Activated CD8-positive, alpha-beta T cell treated with anti-CD3 and anti-CD28 coated beads, Interleukin-2, amount 10 ng/mL, durations not matched to agents 7 days and 5 days (primary cell): ENCODE measurements at regions of chr22 and their contacts with region 1.

Region 1: GRCh38 chr22:41589391-41590241 is at the start of gene PMM1:
- DNase-seq: peak; percentile 100
- ATAC-seq: peak; percentile 98
- H3K4me3 Mint-ChIP-seq: peak within 1 kb of the TSS; percentile 94
- H3K27ac Mint-ChIP-seq: peak within 1 kb of the TSS; percentile 96
- H3K4me1 Mint-ChIP-seq: peaks cover 20% of the 10 kb centered on the region
- H3K27me3 Mint-ChIP-seq: no peaks in the 10 kb centered on the region
- total RNA-seq, gene PMM1: 37.5 to 38.2 TPM

Region 2: GRCh38 chr22:41570221-41570620 is 19.4 kb before region 1 on chr22:
- CTCF ChIA-PET with region 1: no interaction called
- POLR2A ChIA-PET with region 1: interaction called, 11 read pairs
- DNase-seq: no peak
- ATAC-seq: no peak
- H3K4me3 Mint-ChIP-seq: no peak overlapping the region
- H3K27ac Mint-ChIP-seq: no peak overlapping the region
- H3K4me1 Mint-ChIP-seq: peaks cover 4% of the 10 kb centered on the region
- H3K27me3 Mint-ChIP-seq: peaks cover 3% of the 10 kb centered on the region

Region 3: GRCh38 chr22:41576877-41577276 is 12.7 kb before region 1 on chr22:
- CTCF ChIA-PET with region 1: interaction called, 12 read pairs
- POLR2A ChIA-PET with region 1: interaction called, 7 read pairs
- DNase-seq: peak; percentile 64
- ATAC-seq: peak; percentile 80
- H3K4me3 Mint-ChIP-seq: no peak overlapping the region
- H3K27ac Mint-ChIP-seq: no peak overlapping the region
- H3K4me1 Mint-ChIP-seq: peaks cover 5% of the 10 kb centered on the region
- H3K27me3 Mint-ChIP-seq: no peaks in the 10 kb centered on the region

Region 4: DNA sequence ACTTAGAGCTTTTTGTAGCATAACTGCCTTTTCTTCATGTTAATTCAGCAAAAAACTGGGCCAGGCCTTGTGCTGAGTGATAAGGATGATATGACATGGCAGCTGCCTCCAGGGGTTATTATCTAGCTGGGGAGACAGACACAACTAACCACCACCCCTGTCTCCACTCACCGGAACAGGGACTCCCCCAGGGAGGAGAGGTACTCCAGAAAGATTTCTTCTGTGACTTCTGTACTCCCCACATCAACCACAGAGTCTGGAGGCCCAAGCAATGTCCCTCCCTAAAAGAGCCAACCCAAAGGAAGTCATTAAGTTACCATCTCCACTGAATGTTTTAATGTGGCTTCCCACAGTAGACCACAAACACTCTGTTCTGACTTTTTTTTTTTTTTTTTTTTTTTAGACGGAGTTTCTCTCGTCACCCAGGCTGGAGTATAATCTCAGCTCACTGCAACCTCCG is 14.3 kb after region 1 on chr22:
- CTCF ChIA-PET with region 1: interaction called, 3 read pairs
- POLR2A ChIA-PET with region 1: interaction called, 15 read pairs
- DNase-seq: peak; percentile 79
- ATAC-seq: peak; percentile 98
- H3K4me3 Mint-ChIP-seq: peak overlapping the region; percentile 40
- H3K27ac Mint-ChIP-seq: peak overlapping the region; percentile 67
- H3K4me1 Mint-ChIP-seq: peaks cover 29% of the 10 kb centered on the region
- H3K27me3 Mint-ChIP-seq: peaks cover 8% of the 10 kb centered on the region

Region 5: DNA sequence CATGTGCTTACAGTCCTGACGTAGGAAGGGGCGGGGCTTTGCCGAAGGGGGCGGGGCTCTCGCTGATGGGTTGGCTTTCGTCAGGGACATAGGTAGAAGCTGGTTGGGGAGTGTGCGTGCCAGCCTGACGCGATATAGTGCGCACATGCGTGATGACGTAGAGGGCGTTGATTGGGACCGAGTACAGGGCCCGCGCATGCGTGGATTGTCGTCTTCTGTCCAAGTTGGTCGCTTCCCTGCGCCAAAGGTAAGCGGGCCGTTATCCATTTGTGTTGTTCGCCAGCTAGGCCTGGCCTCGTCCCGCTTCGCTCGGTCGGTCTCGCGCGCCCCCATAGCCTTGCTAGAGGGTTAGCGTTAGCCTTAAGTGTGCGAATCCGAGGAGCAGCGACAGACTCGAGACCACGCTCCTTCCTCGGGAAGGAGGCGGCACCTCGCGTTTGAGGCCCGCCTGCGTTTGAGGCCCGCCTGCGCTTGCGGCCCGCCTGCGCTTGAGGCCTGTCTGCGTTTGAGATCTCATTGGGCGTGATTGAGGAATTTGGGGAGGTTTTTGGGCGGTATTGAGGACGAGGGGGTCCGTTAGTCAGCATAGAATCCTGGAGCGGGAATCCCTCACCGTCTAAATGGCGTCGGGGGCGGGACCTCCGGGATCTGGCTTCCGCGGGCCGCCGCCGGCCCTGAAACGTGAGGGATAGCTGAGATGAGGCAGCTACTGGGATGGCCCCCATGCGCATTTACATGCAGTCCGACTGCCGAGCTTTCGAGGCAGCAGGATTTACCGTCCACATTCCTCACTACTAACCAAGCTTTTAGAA is 31.7 kb after region 1 on chr22 and contains the start of gene XRCC6:
- CTCF ChIA-PET with region 1: interaction called, 11 read pairs
- POLR2A ChIA-PET with region 1: interaction called, 44 read pairs
- DNase-seq: peak; percentile 100
- ATAC-seq: peak; percentile 92
- H3K4me3 Mint-ChIP-seq: peak within 1 kb of the TSS; percentile 96
- H3K27ac Mint-ChIP-seq: peak within 1 kb of the TSS; percentile 98
- H3K4me1 Mint-ChIP-seq: peaks cover 46% of the 10 kb centered on the region
- H3K27me3 Mint-ChIP-seq: no peaks in the 10 kb centered on the region
- total RNA-seq, gene XRCC6: 302 to 308 TPM